Motor neuron (in vitro differentiated cells): ENCODE measurements at regions of chr16 and their contacts with region 1.

Region 1: GRCh38 chr16:87778830-87779579 is 13.2 kb upstream of the KLHDC4 start:
- ATAC-seq: peak; percentile 75 to 93 (median 90)
- H3K4me3 ChIP-seq: no peak overlapping the region
- H3K27ac ChIP-seq: peak overlapping the region; percentile 88 to 91
- H3K4me1 ChIP-seq: peaks cover 19 to 20% of the 10 kb centered on the region in 2 donors

Region 2: DNA sequence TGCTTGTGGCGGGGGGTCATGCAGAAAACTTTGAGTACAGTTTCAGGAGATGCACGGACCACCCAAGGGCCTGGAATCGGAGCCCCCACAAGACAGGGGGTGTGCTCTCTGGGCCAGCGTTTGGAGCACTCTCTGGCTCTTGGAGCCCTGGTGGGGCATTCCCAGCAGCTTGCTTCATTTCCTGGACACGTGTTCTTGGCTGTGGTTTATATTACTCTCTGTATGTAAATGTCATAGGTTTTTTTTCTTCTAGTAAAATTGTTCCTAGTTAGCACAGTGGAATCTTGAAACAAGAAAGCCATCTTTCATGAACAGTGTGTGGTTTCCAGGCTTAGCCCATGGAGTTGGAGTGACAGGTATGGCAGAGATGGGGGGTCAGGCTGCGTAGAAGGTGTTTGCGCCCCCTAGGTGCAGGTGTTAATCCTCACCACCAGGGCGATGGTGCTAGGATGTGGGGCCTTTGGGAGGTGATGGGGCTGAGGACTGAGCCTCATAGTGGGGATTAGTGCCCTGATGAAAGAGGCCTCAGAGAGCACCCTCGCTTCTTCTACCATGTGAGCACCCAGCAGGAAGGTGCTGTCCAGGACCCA is 96.9 kb before region 1 on chr16:
- in situ Hi-C with region 1: no loop called
- ATAC-seq: peak in 3 of 8 experiments; percentile 65 to 96 (median 91)
- H3K4me3 ChIP-seq: no peak overlapping the region
- H3K27ac ChIP-seq: no peak overlapping the region
- H3K4me1 ChIP-seq: no peaks in the 10 kb centered on the region

Region 3: DNA sequence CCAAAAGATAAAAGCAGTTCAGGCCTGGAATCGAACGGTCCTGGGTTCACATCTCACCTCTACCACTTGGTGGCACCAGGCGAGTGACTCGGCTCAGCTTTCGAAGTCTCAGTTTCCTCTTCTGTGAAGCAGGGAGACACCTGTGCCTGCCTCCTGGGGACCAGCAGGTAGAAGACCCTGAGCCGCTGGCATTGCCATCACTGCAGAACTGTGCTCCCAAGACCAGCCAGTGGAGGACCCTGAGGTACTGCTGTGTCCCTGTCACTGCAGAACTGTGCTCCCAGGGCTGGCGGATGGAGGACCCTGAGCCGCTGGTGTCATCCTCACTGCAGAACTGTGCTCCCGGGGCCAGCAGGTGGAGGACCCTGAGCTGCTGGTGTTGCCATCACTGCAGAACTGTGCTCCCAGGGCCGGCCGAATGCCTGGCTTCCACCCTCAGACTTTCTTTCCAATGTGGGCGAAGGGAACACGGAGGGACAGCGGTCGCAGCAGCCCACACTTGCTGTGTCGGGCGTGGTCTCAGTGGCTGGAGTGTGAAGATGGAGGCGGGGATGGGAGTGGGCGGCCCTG is 99.0 kb after region 1 on chr16:
- in situ Hi-C with region 1: loop called in 3 of 9 experiments (anchors 10 to 25 kb)
- ATAC-seq: no peak
- H3K4me3 ChIP-seq: no peak overlapping the region
- H3K27ac ChIP-seq: no peak overlapping the region
- H3K4me1 ChIP-seq: peaks cover 8 to 15% of the 10 kb centered on the region in 2 donors

Region 4: GRCh38 chr16:87895641-87896141 is 116.7 kb after region 1 on chr16:
- in situ Hi-C with region 1: loop called in 2 of 9 experiments (anchors 25 kb)
- ATAC-seq: peak in 4 of 8 experiments; percentile 11 to 53 (median 39)
- H3K4me3 ChIP-seq: no peak overlapping the region
- H3K27ac ChIP-seq: no peak overlapping the region
- H3K4me1 ChIP-seq: peaks cover 0 to 4% of the 10 kb centered on the region in 2 donors

Region 5: GRCh38 chr16:88170528-88170991 is 391.6 kb after region 1 on chr16:
- in situ Hi-C with region 1: no loop called
- ATAC-seq: no peak
- H3K4me3 ChIP-seq: no peak overlapping the region
- H3K27ac ChIP-seq: no peak overlapping the region
- H3K4me1 ChIP-seq: no peaks in the 10 kb centered on the region